Testis (tissue), 5 donors: ENCODE measurements at regions of chr3 and their contacts with region 1.

Region 1: DNA sequence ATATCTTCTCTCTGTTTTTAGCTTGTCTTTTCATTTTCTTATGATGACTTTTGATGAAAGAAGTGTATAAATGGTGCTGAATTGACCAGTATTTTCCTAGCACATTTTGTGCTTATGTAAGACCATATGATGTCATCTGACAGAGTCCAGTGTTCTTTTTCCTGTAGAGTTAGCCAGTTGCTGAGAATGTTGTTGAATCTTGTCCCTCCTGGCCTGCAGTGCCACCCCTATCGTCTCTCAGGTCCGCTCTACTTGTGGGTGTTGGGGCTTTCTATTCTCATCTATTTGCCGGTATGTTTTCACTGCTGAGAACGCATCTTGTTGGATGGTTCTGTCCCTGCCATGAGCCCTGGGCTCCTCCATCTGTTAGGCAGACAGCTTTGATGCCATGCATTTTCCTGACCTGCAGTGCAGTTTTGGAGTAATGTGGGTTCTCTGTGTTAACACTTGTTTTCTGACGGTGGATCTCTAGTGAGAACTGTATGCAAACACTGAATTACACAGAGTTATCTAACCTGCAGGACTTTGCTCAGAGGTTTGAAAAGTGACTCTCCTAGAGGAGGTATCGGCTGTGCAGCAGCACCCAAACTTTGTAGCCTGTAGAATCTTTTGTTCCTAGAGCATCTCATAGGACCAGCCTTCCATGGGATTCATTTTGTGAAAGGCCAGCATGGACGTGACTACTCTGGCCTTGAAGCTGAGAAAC is 44.6 kb downstream of the SLC6A20 start:
- DNase-seq: no peak
- H3K4me3 ChIP-seq: no peak overlapping the region
- H3K27ac ChIP-seq: no peak overlapping the region
- H3K4me1 ChIP-seq: no peaks in the 10 kb centered on the region
- H3K27me3 ChIP-seq: no peaks in the 10 kb centered on the region
- CTCF ChIP-seq: no peak
- POLR2A ChIP-seq: no peak

Region 2: GRCh38 chr3:45906681-45907407 is 155.2 kb after region 1 on chr3:
- intact Hi-C with region 1: loop called (anchors 10 kb)
- DNase-seq: peak; percentile 20
- H3K4me3 ChIP-seq: no peak overlapping the region
- H3K27ac ChIP-seq: no peak overlapping the region
- H3K4me1 ChIP-seq: no peaks in the 10 kb centered on the region
- H3K27me3 ChIP-seq: no peaks in the 10 kb centered on the region
- CTCF ChIP-seq: peak in 1 of 3 experiments; percentile 24
- POLR2A ChIP-seq: no peak